ENCODE measurements at regions of chr13 and their contacts with region 1.

Region 1: GRCh38 chr13:33228648-33229445 is 56.7 kb downstream of the STARD13 start:
- DNase-seq: no peak
- ATAC-seq: peak; percentile 81
- H3K4me3 Mint-ChIP-seq: no peak overlapping the region
- H3K27ac Mint-ChIP-seq: peak overlapping the region; percentile 10
- H3K4me1 Mint-ChIP-seq: peaks cover 7% of the 10 kb centered on the region
- H3K27me3 Mint-ChIP-seq: peaks cover 6% of the 10 kb centered on the region

Region 2: GRCh38 chr13:33174931-33175330 is 53.9 kb before region 1 on chr13:
- CTCF ChIA-PET with region 1: no interaction called
- POLR2A ChIA-PET with region 1: no interaction called
- intact Hi-C with region 1: no loop called
- DNase-seq: no peak
- ATAC-seq: no peak
- H3K4me3 Mint-ChIP-seq: no peak overlapping the region
- H3K27ac Mint-ChIP-seq: no peak overlapping the region
- H3K4me1 Mint-ChIP-seq: no peaks in the 10 kb centered on the region
- H3K27me3 Mint-ChIP-seq: peaks cover 19% of the 10 kb centered on the region

Region 3: DNA sequence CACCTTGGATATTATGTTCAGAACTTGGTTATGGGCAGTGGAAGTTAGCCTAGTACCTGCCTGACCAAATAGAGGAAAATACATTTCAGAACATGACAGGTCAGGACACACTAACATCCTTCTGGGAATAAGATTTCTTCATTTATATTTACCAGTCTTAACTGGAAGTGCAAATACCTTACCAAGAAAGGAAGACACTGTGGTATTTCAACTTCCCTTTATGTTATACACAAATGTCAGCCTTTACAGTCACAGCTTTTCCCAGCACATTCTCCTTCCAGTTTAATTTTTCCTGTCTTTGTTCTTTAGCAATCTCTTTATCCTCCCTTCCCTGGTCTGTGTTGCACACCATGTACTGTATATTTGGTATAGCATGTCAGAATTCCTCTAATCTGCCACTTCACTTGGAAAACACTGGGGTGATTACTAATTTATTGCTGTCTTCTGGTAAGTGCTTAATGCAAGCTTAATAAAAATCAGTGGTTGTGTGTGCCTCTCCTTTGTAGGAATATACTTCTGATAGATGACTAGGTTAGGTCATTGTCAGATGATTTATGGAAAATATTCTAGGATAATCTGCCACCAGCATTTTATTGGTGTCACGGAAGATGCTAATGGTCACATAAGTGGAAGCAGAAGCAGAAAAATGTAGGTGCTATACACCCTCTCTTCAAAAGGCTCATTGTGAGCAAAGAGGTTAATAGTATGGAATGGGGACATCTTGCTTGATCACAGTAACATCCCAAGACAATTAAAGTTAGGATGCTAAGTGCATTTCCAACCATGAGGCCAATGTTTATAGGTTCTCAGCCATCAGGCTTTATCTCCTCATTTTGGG is 181.0 kb after region 1 on chr13:
- CTCF ChIA-PET with region 1: no interaction called
- POLR2A ChIA-PET with region 1: no interaction called
- intact Hi-C with region 1: no loop called
- DNase-seq: no peak
- ATAC-seq: no peak
- H3K4me3 Mint-ChIP-seq: no peak overlapping the region
- H3K27ac Mint-ChIP-seq: no peak overlapping the region
- H3K4me1 Mint-ChIP-seq: no peaks in the 10 kb centered on the region
- H3K27me3 Mint-ChIP-seq: peaks cover 20% of the 10 kb centered on the region

Region 4: DNA sequence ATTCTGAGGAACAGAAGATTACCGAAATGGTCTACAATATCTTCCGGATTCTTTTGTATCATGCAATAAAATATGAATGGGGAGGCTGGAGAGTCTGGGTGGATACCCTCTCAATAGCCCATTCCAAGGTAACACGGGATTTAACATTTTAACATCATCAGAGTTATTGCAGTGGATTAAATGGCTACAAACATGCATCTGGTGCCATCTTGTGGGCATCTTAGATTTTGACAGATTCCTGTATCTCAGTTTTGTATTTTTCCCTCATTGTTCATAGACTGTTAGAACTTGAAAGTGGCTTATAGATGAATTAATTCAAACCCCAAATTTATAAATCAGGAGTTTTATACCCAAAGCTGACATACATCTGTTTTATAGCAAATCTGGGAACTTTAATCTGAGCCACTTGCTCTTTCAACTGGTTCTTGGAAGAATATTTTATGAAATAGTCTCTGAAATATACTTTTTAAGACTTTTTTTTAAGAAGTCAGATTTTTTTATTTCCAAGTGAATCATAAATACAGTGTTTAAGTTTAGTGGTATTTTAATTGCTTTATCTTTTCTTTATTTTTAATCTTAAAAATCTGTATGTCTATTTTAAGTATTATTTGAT is 1928.4 kb after region 1 on chr13:
- CTCF ChIA-PET with region 1: no interaction called
- POLR2A ChIA-PET with region 1: no interaction called
- intact Hi-C with region 1: loop called (anchors 10 kb)
- DNase-seq: peak; percentile 47
- ATAC-seq: peak; percentile 39
- H3K4me3 Mint-ChIP-seq: no peak overlapping the region
- H3K27ac Mint-ChIP-seq: no peak overlapping the region
- H3K4me1 Mint-ChIP-seq: peaks cover 2% of the 10 kb centered on the region
- H3K27me3 Mint-ChIP-seq: no peaks in the 10 kb centered on the region

Region 5: DNA sequence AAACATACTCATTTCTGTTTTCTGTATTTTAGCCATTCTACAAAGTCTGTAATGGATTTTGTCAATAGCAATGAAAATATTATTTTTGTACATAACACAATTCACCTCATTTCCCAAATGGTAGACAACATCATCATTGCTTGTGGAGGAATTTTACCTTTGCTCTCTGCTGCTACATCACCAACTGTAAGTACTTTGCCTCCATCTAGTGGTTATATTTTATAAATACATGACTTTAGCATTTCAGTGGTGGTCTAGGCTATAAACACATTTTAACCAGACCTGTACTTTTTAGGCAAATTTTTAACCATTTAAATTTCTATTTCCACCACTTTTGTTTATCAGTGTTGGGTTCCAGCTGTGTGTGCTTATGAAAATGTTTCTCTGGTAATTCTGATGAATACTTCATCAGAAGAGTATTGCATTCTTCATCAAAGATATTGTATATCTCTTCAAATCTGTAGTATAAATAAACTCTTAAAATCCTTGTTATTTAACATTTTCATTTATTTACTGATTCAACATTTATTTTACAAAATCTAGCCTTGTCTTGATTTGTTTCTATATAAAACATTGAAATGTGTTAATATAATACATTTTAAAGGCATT is 1935.6 kb after region 1 on chr13:
- CTCF ChIA-PET with region 1: no interaction called
- POLR2A ChIA-PET with region 1: no interaction called
- intact Hi-C with region 1: loop called (anchors 10 kb)
- DNase-seq: no peak
- ATAC-seq: peak; percentile 55
- H3K4me3 Mint-ChIP-seq: no peak overlapping the region
- H3K27ac Mint-ChIP-seq: no peak overlapping the region
- H3K4me1 Mint-ChIP-seq: peaks cover 7% of the 10 kb centered on the region
- H3K27me3 Mint-ChIP-seq: no peaks in the 10 kb centered on the region